AG04449 (cell line): ENCODE measurements at regions of chr12 and their contacts with region 1.

Region 1: GRCh38 chr12:55996715-55997534 is at the start of gene SUOX:
- DNase-seq: peak; percentile 85
- H3K4me3 ChIP-seq: peak within 1 kb of the TSS; percentile 93
- CTCF ChIP-seq: no peak

Region 2: GRCh38 chr12:55715833-55716581 is 280.9 kb before region 1 on chr12 and contains the start of gene BLOC1S1:
- CTCF ChIA-PET with region 1: no interaction called
- POLR2A ChIA-PET with region 1: no interaction called
- DNase-seq: no peak
- H3K4me3 ChIP-seq: peak within 1 kb of the TSS; percentile 81
- CTCF ChIP-seq: no peak

Region 3: DNA sequence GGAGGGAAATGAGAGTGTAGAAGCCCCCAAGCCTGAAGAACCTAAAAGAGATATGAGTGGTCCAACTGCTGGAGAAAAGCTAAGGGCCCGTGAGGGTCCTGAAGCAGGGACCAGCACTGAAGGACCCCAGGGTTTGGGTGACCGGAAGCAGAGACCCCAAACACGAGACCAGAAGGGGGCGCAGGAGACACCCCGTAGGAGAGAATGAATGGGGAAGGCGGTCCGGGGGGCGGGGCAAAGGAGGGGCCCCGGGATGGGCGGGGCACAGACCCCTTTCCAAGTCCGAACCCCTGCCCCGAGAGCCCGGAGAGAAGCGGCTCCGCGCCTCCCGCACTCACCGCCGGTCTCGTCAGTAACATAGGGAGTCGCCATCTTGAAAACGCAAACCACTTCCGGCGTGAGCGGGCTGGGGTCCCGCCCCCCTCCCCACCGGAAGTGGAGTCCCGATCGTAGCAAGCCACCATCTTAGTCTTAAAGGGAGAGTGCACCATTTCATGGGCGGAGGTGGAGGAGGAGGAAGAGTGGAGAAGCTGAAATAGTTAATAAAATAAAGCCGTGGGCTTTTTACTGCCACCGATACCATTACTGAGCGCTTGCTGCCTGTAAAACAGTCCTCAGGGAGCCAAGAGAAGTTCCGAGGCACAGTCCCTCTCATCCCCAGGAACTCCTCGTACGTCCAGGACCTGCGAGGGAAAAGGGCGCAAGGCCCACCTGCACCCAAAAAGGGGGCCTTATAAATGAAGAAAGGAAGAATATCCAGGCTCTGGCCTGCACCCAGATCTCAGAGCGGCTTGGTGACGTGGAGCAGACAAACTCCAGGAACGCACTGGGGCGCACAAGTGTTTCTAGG is 70.0 kb before region 1 on chr12:
- CTCF ChIA-PET with region 1: interaction called, 14 read pairs
- POLR2A ChIA-PET with region 1: no interaction called
- DNase-seq: peak; percentile 60
- H3K4me3 ChIP-seq: peak overlapping the region; percentile 84
- CTCF ChIP-seq: peak; percentile 80

Region 4: DNA sequence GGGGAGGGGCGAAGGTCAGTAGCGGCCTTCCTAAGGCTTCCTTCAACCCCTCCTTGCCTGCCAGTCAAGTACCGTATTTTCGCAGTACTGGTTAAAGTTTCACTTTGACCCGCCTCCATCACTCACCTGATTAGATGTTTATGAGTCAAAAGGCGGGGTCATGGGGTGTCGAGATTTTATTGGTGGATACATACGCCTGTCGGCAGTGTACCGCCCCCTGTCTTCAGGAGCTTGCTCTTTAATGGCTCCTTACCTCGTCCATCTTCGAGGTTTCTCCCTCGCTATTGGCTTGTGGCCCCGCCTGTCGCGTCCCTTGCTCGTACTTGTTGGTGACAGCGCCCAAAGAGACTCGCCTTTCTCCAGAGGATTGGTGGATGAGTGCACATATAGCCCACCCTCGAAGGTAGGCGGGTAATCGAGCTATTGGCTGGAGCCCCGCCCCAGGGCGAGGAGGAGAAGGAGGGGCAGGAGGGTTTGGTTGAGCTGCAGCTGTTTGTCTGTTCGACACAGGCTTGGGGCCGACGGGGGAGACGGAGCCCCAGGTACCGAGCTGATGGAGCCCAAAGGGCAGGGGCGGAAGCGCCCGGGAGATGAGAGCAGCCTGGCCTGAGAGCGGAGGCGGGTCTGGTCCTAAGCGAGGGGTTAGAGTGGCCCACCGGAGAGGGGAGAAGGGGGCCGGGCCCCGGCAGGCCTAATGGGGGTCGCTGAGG is 23.2 kb before region 1 on chr12 and contains the start of gene RAB5B:
- CTCF ChIA-PET with region 1: interaction called, 213 read pairs
- POLR2A ChIA-PET with region 1: interaction called, 10 read pairs
- DNase-seq: peak; percentile 100
- H3K4me3 ChIP-seq: peak within 1 kb of the TSS; percentile 97
- CTCF ChIP-seq: no peak

Region 5: GRCh38 chr12:56007564-56008559 is 10.9 kb after region 1 on chr12:
- CTCF ChIA-PET with region 1: interaction called, 89 read pairs
- POLR2A ChIA-PET with region 1: interaction called, 18 read pairs
- DNase-seq: no peak
- H3K4me3 ChIP-seq: peak overlapping the region; percentile 69
- CTCF ChIP-seq: no peak

Region 6: DNA sequence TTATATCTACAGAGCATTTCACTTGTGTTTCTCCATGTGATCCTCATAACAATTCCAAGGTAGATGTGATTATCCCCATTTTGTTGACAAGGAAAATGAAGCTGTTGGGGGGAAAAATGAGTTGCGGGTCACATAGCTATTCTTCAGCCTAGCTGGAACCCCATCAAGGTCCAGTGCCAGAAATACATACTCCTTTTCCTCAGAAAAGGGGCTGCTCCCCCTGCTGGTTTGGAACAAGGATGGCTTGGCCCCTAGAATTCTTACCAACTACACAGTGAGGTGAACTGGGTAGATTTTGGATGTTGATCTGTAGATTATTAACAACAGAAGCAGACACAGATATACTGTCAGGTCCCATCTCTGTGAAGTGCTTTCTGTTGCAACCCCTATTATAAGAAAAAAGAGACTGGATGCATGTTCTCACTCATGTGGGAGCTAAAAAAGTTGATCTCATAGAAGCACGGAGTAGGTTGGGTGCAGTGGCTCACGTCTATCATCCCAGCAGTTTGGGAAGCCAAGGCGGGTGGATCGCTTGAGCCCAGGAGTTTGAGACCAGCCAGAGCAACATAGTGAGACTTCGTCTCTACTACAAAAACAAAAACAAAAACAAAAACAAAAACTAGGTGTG is 32.9 kb after region 1 on chr12:
- CTCF ChIA-PET with region 1: interaction called, 168 read pairs
- POLR2A ChIA-PET with region 1: interaction called, 5 read pairs
- DNase-seq: no peak
- H3K4me3 ChIP-seq: no peak overlapping the region
- CTCF ChIP-seq: peak; percentile 82

Region 7: GRCh38 chr12:56078990-56079664 is 82.2 kb after region 1 on chr12:
- CTCF ChIA-PET with region 1: interaction called, 10 read pairs
- POLR2A ChIA-PET with region 1: no interaction called
- DNase-seq: no peak
- H3K4me3 ChIP-seq: peak overlapping the region; percentile 67
- CTCF ChIP-seq: peak; percentile 85

Region 8: DNA sequence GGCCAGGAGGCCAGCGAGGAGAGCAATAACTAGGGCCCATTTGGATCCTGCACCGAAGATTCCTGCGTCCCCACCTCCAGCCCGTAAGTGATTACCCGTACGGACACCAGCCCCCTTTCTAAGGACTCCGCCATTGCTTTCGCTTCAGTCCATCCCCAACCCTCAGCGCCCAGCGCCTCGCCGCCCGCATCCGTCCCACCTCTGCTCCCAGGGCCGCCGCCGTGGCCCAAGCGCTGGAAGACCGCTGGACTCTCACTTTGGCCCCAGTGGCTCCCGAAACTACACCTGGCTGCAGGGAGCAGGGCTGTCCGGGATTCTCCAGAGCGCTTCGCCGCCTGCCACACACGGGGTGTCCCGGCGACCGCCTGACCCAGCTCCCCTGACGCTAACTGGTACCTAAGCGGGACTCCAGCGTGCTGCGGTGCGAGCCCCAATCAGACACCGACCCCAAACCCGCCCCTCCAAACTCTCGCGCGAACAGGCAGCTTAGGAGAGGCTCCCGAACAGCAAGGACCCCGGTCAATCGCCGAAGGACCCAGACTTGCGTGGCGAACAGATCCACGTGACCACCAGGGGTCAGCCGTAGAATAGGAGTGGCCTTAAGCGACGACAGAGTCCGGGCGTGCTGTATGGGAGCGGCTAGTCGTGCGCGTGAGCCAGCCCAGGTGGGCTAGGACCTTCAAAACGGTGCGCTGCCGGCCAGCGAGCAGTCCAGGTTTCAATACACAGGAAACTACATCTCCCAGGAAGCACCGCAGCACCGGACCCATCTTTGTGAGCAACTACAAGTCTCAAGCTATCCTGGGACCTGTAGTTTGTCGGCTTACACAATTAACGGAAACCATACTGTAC is 318.9 kb after region 1 on chr12 and contains the start of gene CNPY2:
- CTCF ChIA-PET with region 1: no interaction called
- POLR2A ChIA-PET with region 1: no interaction called
- DNase-seq: peak; percentile 77
- H3K4me3 ChIP-seq: peak within 1 kb of the TSS; percentile 96
- CTCF ChIP-seq: peak; percentile 14